ENCODE measurements at regions of chr20 and their contacts with region 1.

Region 1: GRCh38 chr20:47356526-47357295 is at the start of gene ZMYND8:
- DNase-seq: peak; percentile 86 to 91 (median 89)
- ATAC-seq: peak; percentile 40 to 63 (median 57)
- H3K4me3 ChIP-seq: peak within 1 kb of the TSS in 7 of 12 donors; percentile 4 to 47 (median 25)
- H3K27ac ChIP-seq: peak within 1 kb of the TSS; percentile 94 to 99 (median 98)
- H3K4me1 ChIP-seq: peaks cover 35 to 100% (median 98%) of the 10 kb centered on the region in 12 donors
- H3K27me3 ChIP-seq: no peaks in the 10 kb centered on the region
- CTCF ChIP-seq: no peak
- POLR2A ChIP-seq: peak in 1 of 2 donors; percentile 63
- total RNA-seq, gene ZMYND8: 21.7 to 46.4 (median 28.9) TPM

Region 2: DNA sequence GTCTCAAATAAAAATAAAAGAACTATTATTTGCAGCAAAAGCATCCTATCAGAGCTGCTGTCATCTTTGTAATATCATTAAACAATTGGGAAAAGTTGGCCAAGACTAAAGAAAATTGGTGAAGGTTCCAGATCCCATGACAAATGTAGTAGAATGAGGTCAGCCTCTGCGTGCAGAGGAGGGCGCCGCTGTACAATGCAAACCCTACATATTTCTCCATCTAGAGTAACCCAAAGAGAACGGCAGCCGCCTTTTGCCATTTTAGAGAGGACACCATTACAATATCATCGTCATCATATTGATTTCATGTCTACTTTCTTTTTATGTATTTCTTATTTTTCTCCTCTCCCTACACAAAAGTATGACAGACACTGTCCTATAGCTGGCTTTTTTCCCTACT is 59.8 kb before region 1 on chr20:
- intact Hi-C with region 1: loop called in 1 of 10 experiments (anchors 5 kb)
- DNase-seq: no peak
- ATAC-seq: no peak
- H3K4me3 ChIP-seq: no peak overlapping the region
- H3K27ac ChIP-seq: peak overlapping the region in 1 of 12 donors; percentile 19
- H3K4me1 ChIP-seq: peaks cover 0 to 23% (median 6%) of the 10 kb centered on the region in 12 donors
- H3K27me3 ChIP-seq: no peaks in the 10 kb centered on the region
- CTCF ChIP-seq: peak in 6 of 12 donors; percentile 7 to 37 (median 22)
- POLR2A ChIP-seq: no peak

Region 3: GRCh38 chr20:47312020-47312662 is 44.6 kb before region 1 on chr20:
- intact Hi-C with region 1: loop called in 4 of 10 experiments (anchors 1 to 5 kb)
- DNase-seq: no peak
- ATAC-seq: no peak
- H3K4me3 ChIP-seq: no peak overlapping the region
- H3K27ac ChIP-seq: peak overlapping the region in 9 of 12 donors; percentile 0 to 99 (median 47)
- H3K4me1 ChIP-seq: peaks cover 12 to 72% (median 40%) of the 10 kb centered on the region in 12 donors
- H3K27me3 ChIP-seq: no peaks in the 10 kb centered on the region
- CTCF ChIP-seq: no peak
- POLR2A ChIP-seq: no peak

Region 4: DNA sequence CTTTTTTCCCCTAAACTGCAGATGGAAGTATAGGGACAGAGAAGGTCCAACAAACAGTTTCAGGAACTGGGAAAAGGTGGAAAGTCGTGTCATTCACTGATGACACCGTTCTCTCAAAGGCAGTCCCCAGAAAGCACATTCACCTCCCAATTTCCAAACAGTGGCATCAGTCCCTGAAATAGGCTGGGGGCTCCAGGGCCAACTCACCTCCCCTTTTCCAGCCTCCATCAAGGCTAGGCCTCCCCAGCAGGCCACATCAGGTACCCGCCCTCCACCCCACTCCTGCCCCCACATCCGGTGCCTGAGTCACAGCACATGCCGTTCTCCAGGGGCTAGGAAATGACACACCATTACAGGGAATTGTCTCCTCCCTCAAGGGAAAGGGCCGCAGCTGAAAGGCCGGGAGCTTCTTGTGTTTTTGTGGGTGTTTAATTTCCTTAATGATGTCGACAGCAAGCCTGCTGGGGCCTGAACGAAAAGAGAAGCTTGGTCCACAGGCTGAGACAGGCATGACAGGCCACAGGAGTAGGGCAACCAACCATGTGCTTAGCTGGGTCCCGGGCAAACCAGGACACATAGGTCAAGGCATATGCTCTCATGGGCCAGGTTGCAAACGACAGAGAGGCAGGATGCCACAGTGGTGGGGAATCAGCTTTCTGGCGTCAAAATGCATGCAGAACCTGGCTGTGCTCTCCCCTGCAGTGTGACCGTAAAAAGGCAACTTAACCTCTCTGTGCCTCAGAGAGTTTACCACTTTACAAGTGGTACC is 39.4 kb before region 1 on chr20:
- intact Hi-C with region 1: loop called (anchors 1 to 5 kb)
- DNase-seq: peak; percentile 78 to 94 (median 85)
- ATAC-seq: peak; percentile 71 to 86 (median 78)
- H3K4me3 ChIP-seq: peak overlapping the region in 3 of 12 donors; percentile 17 to 43 (median 32)
- H3K27ac ChIP-seq: peak overlapping the region; percentile 95 to 100 (median 98)
- H3K4me1 ChIP-seq: peaks cover 13 to 85% (median 71%) of the 10 kb centered on the region in 12 donors
- H3K27me3 ChIP-seq: no peaks in the 10 kb centered on the region
- CTCF ChIP-seq: no peak
- POLR2A ChIP-seq: peak in 1 of 2 donors; percentile 76

Region 5: GRCh38 chr20:47332708-47333527 is 23.8 kb before region 1 on chr20:
- intact Hi-C with region 1: loop called in 1 of 10 experiments (anchors 2 kb)
- DNase-seq: no peak
- ATAC-seq: no peak
- H3K4me3 ChIP-seq: no peak overlapping the region
- H3K27ac ChIP-seq: peak overlapping the region in 8 of 12 donors; percentile 47 to 88 (median 82)
- H3K4me1 ChIP-seq: peaks cover 0 to 95% (median 59%) of the 10 kb centered on the region in 12 donors
- H3K27me3 ChIP-seq: no peaks in the 10 kb centered on the region
- CTCF ChIP-seq: no peak
- POLR2A ChIP-seq: no peak

Measured in heart left ventricle (tissue), 16 donors.